BJ (cell line): ENCODE measurements at regions of chr3 and their contacts with region 1.

Region 1: DNA sequence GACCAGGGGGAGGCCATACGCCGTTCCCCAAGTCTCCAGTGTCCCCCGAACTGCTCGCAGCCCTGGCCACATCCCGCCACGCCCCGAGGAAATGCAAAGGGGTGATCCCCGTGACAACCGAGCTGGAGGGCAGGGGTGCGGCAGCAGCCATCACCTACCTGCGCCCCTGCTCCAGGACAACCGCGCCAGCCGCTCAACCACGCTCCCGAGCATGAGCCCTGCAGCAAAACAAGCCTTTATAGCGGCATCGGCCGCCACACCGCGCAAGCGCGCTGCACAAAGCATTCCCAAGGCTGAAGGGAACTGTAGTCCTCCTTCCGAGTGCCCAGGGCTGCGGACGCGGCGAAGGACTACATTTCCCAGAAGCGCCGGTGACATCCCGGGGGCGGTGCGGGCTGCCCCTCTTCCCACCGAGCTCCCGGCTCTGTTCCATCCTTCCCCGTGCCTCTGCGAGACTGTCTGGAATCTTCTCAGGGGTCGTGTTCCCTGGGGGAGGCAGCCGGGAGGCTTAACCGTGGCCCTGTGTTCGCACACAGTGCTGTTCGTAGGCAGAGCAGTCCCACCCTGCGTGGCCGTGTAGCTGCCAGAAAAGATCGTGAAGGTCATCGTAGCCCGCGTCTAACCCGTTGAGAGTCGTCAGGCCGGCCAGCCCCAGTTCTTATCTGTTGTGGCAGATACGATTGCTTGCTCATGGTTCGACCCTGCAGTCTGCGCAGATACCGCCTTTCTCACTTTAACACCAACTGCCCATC is at the start of gene ABCC5:
- DNase-seq: peak; percentile 51
- H3K4me3 ChIP-seq: peak within 1 kb of the TSS; percentile 100
- H3K27me3 ChIP-seq: no peaks in the 10 kb centered on the region
- CTCF ChIP-seq: no peak
- polyA plus RNA-seq, gene ABCC5: 16.5 and 16.9 TPM in 2 replicates

Region 2: GRCh38 chr3:182490596-182491491 is 1527.0 kb before region 1 on chr3:
- CTCF ChIA-PET with region 1: no interaction called
- POLR2A ChIA-PET with region 1: no interaction called
- DNase-seq: no peak
- H3K4me3 ChIP-seq: no peak overlapping the region
- H3K27me3 ChIP-seq: no peaks in the 10 kb centered on the region
- CTCF ChIP-seq: 0 out of 2 replicates have a peak, but pooled peaks have one; percentile 2

Region 3: GRCh38 chr3:183252973-183253901 is 764.6 kb before region 1 on chr3 and contains the start of gene B3GNT5:
- CTCF ChIA-PET with region 1: no interaction called
- POLR2A ChIA-PET with region 1: no interaction called
- DNase-seq: no peak
- H3K4me3 ChIP-seq: peak within 1 kb of the TSS; percentile 51
- H3K27me3 ChIP-seq: peaks cover 21% of the 10 kb centered on the region
- CTCF ChIP-seq: no peak
- polyA plus RNA-seq, gene B3GNT5: 0.27 and 0.60 TPM in 2 replicates

Region 4: DNA sequence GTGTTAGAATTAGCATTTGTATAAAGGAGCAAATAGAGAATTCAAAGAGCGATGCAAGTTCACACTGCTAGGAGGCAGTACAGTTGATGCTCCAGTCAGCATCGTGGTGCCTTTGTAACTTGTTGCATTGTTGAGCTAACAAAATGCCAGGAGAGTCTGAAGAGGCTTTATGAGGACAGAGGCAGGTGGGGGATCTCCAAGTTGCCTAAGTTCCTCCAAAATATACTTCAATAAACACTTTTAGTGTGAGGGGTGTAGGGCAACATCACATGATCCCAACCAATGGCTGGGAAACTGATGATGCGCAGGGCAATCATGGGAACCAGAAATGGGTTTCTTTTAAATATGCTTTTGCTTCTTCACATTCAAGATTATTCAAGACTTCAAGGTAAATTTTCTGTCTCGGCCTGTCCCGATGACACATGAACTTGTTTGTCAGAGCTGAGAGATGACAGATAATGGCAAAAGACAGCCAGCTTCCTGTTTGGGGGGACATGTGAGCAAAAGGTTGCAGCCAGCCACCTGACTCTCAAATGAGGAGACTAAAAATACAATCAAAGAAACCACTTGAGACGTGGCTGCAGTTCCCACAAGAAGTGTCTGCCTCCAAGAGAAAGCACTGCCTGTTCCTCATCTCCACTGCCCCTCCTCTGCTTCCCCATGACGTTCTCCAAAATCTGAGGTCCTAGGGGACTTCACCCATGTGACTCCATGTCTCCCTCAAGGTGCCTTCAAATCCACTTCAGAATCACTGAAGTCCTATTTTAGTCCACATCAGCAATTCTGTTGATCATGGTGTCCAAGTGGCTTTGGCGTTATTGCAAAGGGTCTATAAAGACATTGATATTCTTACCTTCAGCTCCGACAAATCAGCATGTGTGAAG is 501.6 kb before region 1 on chr3:
- CTCF ChIA-PET with region 1: no interaction called
- POLR2A ChIA-PET with region 1: no interaction called
- DNase-seq: no peak
- H3K4me3 ChIP-seq: no peak overlapping the region
- H3K27me3 ChIP-seq: peaks cover 10% of the 10 kb centered on the region
- CTCF ChIP-seq: no peak

Region 5: GRCh38 chr3:183895296-183895695 is 122.6 kb before region 1 on chr3:
- CTCF ChIA-PET with region 1: interaction called, 67 read pairs
- POLR2A ChIA-PET with region 1: no interaction called
- DNase-seq: no peak
- H3K4me3 ChIP-seq: no peak overlapping the region
- H3K27me3 ChIP-seq: peaks cover 3% of the 10 kb centered on the region; the same call in 1 of the 2 replicates
- CTCF ChIP-seq: peak; percentile 84

Region 6: DNA sequence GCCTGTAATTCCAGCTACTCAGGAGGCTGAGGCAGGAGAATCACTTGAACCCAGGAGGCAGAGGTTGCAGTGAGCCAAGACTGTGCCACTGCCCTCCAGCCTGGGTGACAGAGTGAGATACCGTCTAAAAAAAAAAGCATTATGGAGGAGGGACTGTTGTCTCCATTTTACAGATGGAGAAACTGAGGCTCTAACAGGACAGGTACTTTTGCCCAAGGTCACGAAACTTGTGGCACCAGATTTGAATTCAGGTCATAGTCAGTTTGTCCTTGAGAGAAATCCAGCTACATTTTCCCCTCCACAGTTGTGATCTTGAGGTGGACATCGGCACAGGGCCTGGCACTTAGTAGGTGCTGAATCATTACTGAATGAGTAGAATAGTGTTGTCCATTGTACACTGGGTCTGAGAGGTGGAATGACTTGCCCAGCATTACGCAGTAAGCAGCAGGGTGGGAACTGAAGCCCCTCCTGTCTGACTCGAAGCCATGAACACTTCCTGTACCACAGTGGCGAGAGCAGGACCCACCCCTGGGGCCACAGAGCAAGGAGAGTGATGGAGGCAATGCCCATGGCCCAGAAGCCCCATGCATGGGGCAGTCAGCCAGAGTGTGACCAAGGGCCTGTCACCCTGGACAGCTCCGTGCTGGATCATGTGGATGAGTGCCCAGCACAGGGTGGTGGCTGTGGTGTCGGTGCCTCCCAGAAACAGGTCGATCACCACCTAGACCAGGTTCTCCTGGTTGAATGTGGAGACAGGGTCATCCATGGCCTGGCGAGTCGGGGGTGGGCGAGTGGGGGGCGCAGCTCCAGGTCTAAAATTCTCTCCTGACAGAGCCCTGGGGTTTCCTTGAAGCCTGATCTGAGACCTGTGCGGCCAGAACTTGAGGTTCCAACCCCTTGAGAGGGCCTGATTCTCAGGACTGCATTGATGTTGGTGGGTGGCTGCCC is 112.7 kb before region 1 on chr3:
- CTCF ChIA-PET with region 1: interaction called, 10 read pairs
- POLR2A ChIA-PET with region 1: no interaction called
- DNase-seq: no peak
- H3K4me3 ChIP-seq: no peak overlapping the region
- H3K27me3 ChIP-seq: peaks cover 3% of the 10 kb centered on the region
- CTCF ChIP-seq: no peak

Region 7: DNA sequence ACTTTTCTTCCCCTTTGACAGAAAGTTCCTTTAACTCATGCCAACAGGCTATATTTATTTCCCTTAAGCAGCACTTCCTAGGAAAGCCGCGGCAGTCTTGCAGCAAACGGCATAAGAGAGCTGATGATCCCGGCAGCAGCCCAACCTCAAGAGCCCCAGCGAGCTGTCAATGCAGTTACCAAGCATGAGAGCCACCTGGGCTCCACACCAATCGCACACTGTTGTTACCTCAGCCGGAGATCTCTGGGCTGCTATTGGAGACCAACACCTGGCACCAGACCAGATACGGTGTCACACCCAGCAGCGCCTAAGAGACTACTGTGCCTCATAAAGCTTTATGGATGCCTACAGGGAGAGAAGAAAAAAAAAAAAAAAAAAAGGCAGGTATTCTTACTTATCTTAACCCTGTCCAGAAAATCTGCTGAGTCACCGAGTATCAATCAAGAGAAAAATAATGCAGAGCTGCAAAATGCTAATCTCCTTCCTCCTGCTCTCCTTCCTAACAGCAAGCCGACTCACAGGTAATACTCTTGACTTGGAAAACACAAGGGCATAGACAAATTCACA is 11.8 kb before region 1 on chr3:
- CTCF ChIA-PET with region 1: interaction called, 11 read pairs
- POLR2A ChIA-PET with region 1: no interaction called
- DNase-seq: no peak
- H3K4me3 ChIP-seq: no peak overlapping the region
- H3K27me3 ChIP-seq: no peaks in the 10 kb centered on the region
- CTCF ChIP-seq: no peak